ENCODE measurements at regions of chr10 and their contacts with region 1.

Region 1: GRCh38 chr10:71333129-71333887 is 14.2 kb downstream of the SLC29A3 start:
- DNase-seq: no peak
- ATAC-seq: no peak
- H3K4me3 Mint-ChIP-seq: no peak overlapping the region
- H3K27ac Mint-ChIP-seq: peak overlapping the region; percentile 65; the same call in 1 of the 2 replicates
- H3K4me1 Mint-ChIP-seq: peaks cover 27% of the 10 kb centered on the region
- H3K27me3 Mint-ChIP-seq: no peaks in the 10 kb centered on the region
- CTCF ChIP-seq: no peak

Region 2: DNA sequence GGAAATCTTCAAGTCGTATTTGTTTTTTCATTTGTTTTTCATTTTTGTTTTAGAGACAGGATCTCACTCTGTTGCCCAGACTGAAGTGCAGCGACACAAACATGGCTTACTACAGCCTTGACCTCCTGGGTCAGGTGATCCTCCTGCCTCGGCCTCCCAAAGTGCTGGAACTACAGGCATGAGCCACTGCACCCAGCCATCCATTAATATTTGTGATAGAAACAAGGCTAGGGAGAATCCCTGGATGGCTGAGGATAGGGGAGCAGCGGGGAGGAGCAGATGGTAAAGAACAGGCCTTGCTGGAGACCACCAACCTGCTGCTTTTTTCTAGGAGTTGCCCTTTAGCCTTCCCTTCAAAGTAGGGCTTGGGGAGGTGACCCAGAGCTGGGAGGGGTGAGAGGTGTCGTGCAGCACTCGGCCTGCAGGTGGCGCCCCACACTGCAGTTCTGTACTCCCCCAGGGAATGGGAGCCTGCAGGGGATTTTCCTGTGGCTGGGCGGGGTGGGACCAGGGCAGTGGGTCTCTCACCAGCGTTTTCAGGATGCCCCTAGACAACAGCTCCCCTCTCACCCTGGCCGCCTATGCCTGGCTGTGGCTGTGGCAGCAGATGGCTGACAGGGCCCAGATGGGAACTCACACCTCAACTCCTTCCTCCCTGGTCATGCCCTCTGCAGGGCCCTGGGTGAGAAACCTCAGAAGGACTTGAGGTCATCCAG is 50.8 kb after region 1 on chr10:
- CTCF ChIA-PET with region 1: interaction called, 10 read pairs
- POLR2A ChIA-PET with region 1: no interaction called
- DNase-seq: peak; percentile 93
- ATAC-seq: peak; percentile 97
- H3K4me3 Mint-ChIP-seq: no peak overlapping the region
- H3K27ac Mint-ChIP-seq: no peak overlapping the region
- H3K4me1 Mint-ChIP-seq: no peaks in the 10 kb centered on the region
- H3K27me3 Mint-ChIP-seq: no peaks in the 10 kb centered on the region
- CTCF ChIP-seq: peak; percentile 96

Region 3: DNA sequence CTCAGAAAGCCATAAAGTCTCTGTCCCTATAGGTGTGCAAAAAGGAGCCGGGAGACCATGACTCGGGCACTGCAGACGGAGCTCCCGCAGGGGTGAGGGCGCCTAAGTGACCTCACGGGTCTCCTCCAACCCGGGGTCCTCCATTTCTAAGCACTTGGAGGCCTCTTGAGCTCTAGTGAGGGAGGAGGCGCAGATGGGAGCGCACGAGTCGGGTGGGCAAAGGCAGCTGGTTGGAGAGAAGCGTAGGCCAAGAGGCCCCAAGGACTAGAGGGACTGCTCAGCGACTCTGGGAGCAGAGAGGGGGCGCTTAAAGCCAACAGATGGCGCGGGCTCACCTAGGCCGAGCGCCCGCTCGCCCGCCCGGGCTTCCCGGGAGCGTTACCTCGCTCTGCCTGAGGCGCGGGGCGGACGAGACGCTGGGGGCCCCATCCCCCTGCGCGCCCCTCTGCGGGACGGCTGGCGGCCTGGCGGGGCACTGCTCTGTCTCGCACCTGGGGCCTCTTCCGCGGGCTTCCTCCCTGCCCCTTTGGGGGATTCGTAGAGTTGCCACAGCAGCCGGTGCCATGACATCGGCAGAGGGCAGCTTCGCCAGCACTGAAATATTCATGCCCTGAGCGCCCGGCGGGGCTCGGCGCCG is 62.9 kb after region 1 on chr10:
- CTCF ChIA-PET with region 1: no interaction called
- POLR2A ChIA-PET with region 1: no interaction called
- DNase-seq: peak; percentile 76
- ATAC-seq: peak; percentile 86
- H3K4me3 Mint-ChIP-seq: peak overlapping the region; percentile 63
- H3K27ac Mint-ChIP-seq: no peak overlapping the region
- H3K4me1 Mint-ChIP-seq: peaks cover 20% of the 10 kb centered on the region
- H3K27me3 Mint-ChIP-seq: peaks cover 59% of the 10 kb centered on the region
- CTCF ChIP-seq: no peak

Region 4: DNA sequence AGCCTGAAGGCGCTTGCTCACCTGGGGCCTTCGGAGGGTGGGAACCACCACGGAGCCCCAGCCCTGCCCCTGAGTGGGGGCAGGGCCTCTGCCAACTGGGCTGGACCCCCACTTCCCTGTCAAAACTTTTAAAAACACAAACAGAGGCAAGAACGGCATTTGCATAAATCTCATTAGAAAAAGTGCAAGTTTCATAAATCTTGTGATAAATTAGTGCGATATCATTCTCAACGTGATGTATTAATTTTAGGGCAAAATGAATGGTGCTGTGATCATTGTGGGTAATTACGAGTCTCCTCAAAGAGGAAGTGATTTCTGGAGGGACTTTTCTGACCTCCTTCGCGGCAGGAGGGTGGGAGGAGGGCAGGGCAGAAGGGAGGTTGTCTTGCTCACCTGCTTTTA is 161.7 kb after region 1 on chr10:
- CTCF ChIA-PET with region 1: no interaction called
- POLR2A ChIA-PET with region 1: no interaction called
- DNase-seq: no peak
- ATAC-seq: no peak
- H3K4me3 Mint-ChIP-seq: no peak overlapping the region
- H3K27ac Mint-ChIP-seq: no peak overlapping the region
- H3K4me1 Mint-ChIP-seq: peaks cover 27% of the 10 kb centered on the region
- H3K27me3 Mint-ChIP-seq: peaks cover 86% of the 10 kb centered on the region
- CTCF ChIP-seq: no peak

Measured in WTC11 (cell line).